ENCODE measurements at regions of chr19 and their contacts with region 1.

Region 1: GRCh38 chr19:13162518-13163314 is 12.5 kb downstream of the IER2 start:
- DNase-seq: peak; percentile 99
- ATAC-seq: peak; percentile 88 to 93
- H3K4me3 ChIP-seq: peak overlapping the region; percentile 21
- H3K27ac ChIP-seq: peak overlapping the region; percentile 94
- H3K4me1 ChIP-seq: peaks cover 11% of the 10 kb centered on the region
- H3K27me3 ChIP-seq: no peaks in the 10 kb centered on the region

Region 2: DNA sequence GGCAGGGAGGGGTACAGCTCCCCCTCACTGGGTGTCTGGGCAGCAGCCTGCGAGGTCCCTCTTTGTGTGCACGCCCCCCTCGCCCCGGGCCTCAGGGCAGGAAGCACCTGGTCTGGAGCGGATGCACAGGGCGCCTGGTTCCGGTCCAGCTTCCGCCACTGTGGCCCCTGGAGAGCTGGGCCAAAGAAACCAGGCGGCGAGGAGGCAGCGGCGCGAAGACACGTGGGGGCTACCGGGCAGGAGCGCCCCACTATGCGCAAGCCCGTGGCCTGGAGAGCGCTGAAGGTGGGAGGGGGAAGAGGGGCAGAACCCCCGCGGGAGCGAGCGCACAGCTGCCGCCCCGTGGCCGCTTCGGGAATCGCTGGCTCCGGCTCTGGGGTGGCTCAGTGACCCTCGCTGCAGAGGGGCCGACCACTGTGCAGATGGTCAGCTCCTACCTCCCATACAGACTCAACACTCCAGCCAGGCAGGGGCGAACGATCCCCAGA is 58.3 kb before region 1 on chr19:
- intact Hi-C with region 1: loop called in 1 of 4 experiments (anchors 5 kb)
- DNase-seq: peak; percentile 73 to 91 (median 88)
- ATAC-seq: peak; percentile 10 to 35
- H3K4me3 ChIP-seq: no peak overlapping the region
- H3K27ac ChIP-seq: peak overlapping the region; percentile 32
- H3K4me1 ChIP-seq: no peaks in the 10 kb centered on the region
- H3K27me3 ChIP-seq: no peaks in the 10 kb centered on the region

Measured in right cardiac atrium (tissue), 5 donors.